ENCODE measurements at regions of chr10 and their contacts with region 1.

Region 1: DNA sequence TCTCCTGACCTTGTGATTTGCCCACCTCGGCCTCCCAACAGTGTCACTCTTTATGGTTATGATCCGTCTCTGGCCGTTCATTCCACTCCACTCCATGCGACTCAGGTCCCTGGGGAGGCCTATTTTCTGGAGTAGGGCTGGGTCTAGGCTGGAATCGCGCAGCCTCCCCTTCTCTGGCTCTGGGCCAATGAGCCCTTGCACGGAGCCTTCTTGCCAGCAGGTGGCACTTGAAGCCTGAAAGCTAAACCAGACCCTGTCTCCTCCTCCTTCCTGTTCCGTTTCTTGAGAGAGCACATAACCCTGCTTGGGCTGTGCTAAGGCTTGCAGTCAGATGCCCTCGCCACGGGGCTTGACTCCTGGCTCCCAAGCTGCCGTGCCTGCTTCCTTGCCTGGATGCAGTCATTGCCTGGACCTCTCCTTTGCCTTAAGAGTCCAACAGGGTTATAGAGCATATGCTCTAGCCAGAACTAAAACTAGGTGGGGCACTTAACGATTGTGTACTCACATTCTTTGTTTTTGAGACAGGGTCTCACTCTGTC is 9.6 kb upstream of the DNAJB12 start:
- DNase-seq: peak; percentile 83
- H3K4me3 ChIP-seq: peak overlapping the region in 1 of 2 experiments; percentile 34; a peak in 1 of 4 replicates
- H3K27ac ChIP-seq: peak overlapping the region; percentile 25 to 62; a peak in 2 of 4 replicates
- H3K4me1 ChIP-seq: peaks cover 2 to 12% of the 10 kb centered on the region in 2 experiments; a peak in 1 of 4 replicates
- H3K27me3 ChIP-seq: no peaks in the 10 kb centered on the region
- CTCF ChIP-seq: peak; percentile 93
- EP300 ChIP-seq: no peak
- RAD21 ChIP-seq: peak; percentile 97

Region 2: DNA sequence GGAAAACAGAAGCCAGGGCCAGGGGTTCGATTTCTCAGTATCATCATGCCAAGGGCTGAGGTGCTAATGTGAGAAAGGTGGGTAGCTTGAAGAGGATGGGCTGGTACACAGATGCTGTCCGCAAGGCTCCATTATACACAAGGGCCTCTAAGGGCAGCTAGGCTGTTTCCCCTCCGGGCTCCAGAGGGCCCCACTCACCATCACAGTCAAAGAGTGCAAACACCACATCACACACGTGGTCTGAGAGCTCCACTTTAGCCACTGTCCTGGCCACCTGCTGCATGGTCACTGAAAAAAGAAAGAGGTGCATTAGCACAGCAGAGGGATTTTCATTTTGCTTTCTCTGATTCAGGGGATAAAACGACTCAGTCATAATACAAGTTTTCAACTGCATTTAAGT is 11.3 kb after region 1 on chr10:
- CTCF ChIA-PET with region 1: interaction called, 11 read pairs
- POLR2A ChIA-PET with region 1: no interaction called
- DNase-seq: no peak
- H3K4me3 ChIP-seq: no peak overlapping the region
- H3K27ac ChIP-seq: no peak overlapping the region
- H3K4me1 ChIP-seq: no peaks in the 10 kb centered on the region
- H3K27me3 ChIP-seq: no peaks in the 10 kb centered on the region
- CTCF ChIP-seq: 0 out of 2 replicates have a peak, but pooled peaks have one; percentile 10
- EP300 ChIP-seq: no peak
- RAD21 ChIP-seq: peak; percentile 26; the same call in 1 of the 2 replicates

Region 3: GRCh38 chr10:72612203-72612826 is 248.0 kb after region 1 on chr10:
- CTCF ChIA-PET with region 1: interaction called, 10 read pairs
- POLR2A ChIA-PET with region 1: no interaction called
- DNase-seq: peak; percentile 46
- H3K4me3 ChIP-seq: no peak overlapping the region
- H3K27ac ChIP-seq: peak overlapping the region; percentile 11 to 84; a peak in 3 of 4 replicates
- H3K4me1 ChIP-seq: peaks cover 2 to 8% of the 10 kb centered on the region in 2 experiments; a peak in 3 of 4 replicates
- H3K27me3 ChIP-seq: no peaks in the 10 kb centered on the region
- CTCF ChIP-seq: no peak
- EP300 ChIP-seq: no peak
- RAD21 ChIP-seq: no peak

Region 4: DNA sequence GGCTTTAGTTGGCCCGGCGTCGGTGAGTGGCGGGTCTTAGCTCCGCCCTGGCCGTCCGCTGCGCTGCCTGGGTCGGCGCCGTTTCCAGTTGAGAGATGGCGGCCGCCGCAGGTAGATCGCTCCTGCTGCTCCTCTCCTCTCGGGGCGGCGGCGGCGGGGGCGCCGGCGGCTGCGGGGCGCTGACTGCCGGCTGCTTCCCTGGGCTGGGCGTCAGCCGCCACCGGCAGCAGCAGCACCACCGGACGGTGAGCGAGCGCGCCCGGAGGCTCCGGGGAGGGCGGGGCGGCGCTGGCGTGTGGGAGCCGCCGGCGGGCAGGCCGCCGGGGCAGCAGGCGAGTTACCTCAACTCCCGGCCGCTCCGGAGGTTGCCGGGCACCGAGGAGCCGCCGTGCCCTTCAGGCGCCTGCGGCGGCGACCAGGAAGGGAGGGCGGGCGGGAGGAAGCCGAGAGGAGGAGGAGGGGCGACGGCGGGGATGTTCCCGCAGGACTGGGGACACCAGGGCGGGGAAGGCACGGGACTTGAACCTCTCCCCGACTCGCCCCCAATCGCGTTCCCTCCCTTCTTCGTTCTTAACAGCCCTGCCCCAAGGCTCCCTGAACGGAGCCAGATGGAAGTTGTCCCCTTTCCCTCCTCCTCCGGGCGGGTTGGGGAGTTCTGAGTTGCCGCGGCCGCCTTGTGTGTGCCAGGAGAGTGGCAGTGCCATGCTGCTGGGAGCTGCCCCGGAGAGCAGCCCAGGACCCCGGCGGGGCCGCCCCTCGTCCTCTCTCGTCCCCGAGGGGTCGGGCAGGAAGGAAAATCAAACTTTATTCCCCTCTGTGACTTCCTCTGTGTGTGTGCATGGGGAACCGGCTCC is 328.0 kb after region 1 on chr10 and contains the start of gene MCU:
- CTCF ChIA-PET with region 1: interaction called, 14 read pairs
- POLR2A ChIA-PET with region 1: interaction called, 3 read pairs
- DNase-seq: peak; percentile 94
- H3K4me3 ChIP-seq: peak within 1 kb of the TSS; percentile 89
- H3K27ac ChIP-seq: peak within 1 kb of the TSS; percentile 20 to 80; a peak in 3 of 4 replicates
- H3K4me1 ChIP-seq: peaks cover 8 to 11% of the 10 kb centered on the region in 2 experiments; a peak in 3 of 4 replicates
- H3K27me3 ChIP-seq: no peaks in the 10 kb centered on the region
- CTCF ChIP-seq: no peak
- EP300 ChIP-seq: no peak
- RAD21 ChIP-seq: no peak
- polyA plus RNA-seq, gene MCU: 20.6 and 30.1 TPM in 2 replicates

Region 5: DNA sequence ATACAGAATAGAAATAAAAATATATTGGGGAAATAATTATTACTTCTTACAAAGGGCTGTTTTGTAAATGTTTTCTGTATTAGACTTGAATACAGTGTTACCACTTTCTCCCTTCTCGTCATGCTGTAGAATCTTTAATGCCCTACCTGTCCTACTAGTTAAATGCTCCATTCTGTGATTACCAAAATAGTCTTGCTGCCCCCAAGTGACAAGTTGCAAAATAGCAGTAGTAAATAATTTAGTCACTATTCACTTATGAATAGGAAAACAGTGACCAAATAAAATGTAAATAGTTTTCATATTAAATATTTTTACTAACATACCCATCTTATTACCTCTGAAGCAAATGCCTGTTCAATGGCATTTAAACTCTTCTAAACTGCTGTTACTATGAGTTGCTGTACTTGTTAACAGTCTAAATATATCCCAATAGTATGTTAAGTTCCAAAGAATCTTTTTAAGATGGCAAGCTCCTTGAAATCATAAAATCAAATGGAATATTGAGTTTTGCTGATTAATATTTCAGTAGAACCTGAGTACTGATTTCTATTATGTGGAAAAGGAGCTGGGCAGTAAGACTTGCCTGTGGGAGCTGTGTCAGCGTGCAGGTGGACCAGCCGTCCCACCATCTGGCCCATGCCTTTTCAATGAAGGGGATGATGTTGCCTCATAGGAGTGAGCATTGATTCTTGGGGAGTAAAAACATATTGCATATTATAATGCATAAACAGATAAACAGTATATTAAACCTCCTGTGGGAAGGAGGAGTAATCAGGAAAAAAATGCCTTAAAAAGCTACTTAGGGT is 511.1 kb after region 1 on chr10:
- CTCF ChIA-PET with region 1: interaction called, 19 read pairs
- POLR2A ChIA-PET with region 1: no interaction called
- DNase-seq: peak; percentile 25
- H3K4me3 ChIP-seq: no peak overlapping the region
- H3K27ac ChIP-seq: no peak overlapping the region
- H3K4me1 ChIP-seq: no peaks in the 10 kb centered on the region
- H3K27me3 ChIP-seq: no peaks in the 10 kb centered on the region
- CTCF ChIP-seq: peak; percentile 66
- EP300 ChIP-seq: no peak
- RAD21 ChIP-seq: peak; percentile 74